AG04450 (cell line): ENCODE measurements at regions of chr1 and their contacts with region 1.

Region 1: DNA sequence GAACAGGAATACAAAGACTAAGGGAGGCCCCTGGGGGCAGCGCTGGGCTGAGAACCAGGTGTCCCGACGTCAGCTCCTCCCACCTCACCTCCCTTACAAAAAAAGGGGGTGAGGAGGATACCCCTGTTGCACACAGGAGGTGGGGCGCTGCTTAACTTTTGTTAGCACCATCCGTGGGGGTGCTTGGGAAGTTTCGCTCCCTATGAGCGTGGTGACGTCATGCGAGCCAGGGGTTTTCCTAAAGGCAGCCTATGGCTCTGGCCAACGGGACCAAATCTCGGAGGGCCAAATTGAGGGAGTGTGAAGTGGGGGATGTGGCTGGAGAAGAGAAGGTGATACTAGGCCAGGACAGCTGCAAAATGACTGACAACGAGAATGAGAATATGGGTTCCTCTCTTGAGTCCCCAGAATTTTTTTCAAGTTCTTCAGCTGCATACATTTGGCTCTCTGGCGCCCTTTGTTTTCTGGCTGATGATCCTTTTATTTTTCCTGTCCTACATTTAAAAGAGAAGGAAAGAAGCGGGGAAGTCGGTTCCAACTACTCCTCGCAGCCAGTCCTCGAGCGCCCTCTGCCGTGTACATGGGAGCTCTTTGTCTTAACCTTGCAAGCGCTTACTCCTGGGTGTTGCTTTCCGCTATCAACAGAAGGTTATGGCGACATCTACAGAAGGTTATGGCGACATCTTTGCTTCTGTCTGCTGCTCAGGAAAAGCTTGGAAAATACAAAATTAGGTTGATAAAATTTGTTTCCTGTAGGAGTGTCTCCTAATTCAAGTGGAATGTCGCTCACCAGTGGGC is 48.0 kb upstream of the ZC3H11B start:
- DNase-seq: peak; percentile 74
- H3K4me3 ChIP-seq: peak overlapping the region; percentile 20
- H3K27ac ChIP-seq: no peak overlapping the region
- H3K27me3 ChIP-seq: no peaks in the 10 kb centered on the region
- CTCF ChIP-seq: peak; percentile 94

Region 2: GRCh38 chr1:218339267-218339831 is 1321.5 kb before region 1 on chr1:
- CTCF ChIA-PET with region 1: interaction called, 10 read pairs
- POLR2A ChIA-PET with region 1: no interaction called
- DNase-seq: no peak
- H3K4me3 ChIP-seq: no peak overlapping the region
- H3K27ac ChIP-seq: no peak overlapping the region
- H3K27me3 ChIP-seq: no peaks in the 10 kb centered on the region
- CTCF ChIP-seq: peak; percentile 73

Region 3: GRCh38 chr1:219676012-219676765 is 15.3 kb after region 1 on chr1:
- CTCF ChIA-PET with region 1: interaction called, 11 read pairs
- POLR2A ChIA-PET with region 1: no interaction called
- DNase-seq: no peak
- H3K4me3 ChIP-seq: no peak overlapping the region
- H3K27ac ChIP-seq: no peak overlapping the region
- H3K27me3 ChIP-seq: no peaks in the 10 kb centered on the region
- CTCF ChIP-seq: no peak

Region 4: DNA sequence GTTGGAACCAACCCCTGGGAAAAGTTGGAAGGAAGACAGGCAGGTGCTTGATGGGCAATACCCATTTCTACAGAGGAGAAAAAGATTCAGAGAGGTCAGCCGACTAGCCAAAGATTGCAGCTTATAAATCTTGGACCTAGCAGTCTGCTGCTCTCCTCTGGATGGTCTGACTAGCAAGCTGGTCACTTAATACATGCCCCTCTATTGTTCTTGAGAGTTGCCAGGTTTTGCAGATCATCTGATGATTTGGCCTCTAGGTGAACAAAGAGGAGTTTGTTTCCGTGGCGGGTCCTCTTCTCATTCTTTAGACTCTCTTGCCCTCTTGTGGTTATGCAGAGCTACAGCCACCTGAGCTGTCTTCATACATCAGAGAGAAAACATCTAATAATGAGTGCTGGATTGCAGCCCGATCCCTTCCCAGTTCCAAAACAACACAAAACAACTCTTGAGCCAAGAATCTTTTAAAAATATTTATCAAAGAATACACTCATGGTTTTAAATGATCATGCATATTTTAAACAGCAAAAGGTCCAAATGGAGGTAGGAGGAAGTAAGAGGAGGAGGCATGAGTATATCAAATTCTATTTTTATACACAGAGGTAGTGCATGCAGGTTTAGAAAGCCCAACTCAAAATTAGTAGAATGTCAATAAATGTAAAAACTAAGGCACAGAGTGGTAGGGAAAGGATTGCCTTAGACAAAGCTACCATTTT is 151.8 kb after region 1 on chr1:
- CTCF ChIA-PET with region 1: interaction called, 15 read pairs
- POLR2A ChIA-PET with region 1: no interaction called
- DNase-seq: peak; percentile 54
- H3K4me3 ChIP-seq: no peak overlapping the region
- H3K27ac ChIP-seq: no peak overlapping the region
- H3K27me3 ChIP-seq: peaks cover 23% of the 10 kb centered on the region
- CTCF ChIP-seq: peak; percentile 95